ENCODE measurements at regions of chr7 and their contacts with region 1.

Region 1: GRCh38 chr7:111735661-111736551 is 173.6 kb upstream of the IMMP2L start:
- DNase-seq: peak; percentile 47 to 85
- H3K4me3 ChIP-seq: no peak overlapping the region
- H3K27ac ChIP-seq: no peak overlapping the region
- H3K4me1 ChIP-seq: no peaks in the 10 kb centered on the region
- H3K27me3 ChIP-seq: no peaks in the 10 kb centered on the region
- CTCF ChIP-seq: peak in 5 of 7 experiments; percentile 44 to 81 (median 79)
- EP300 ChIP-seq: no peak
- POLR2A ChIP-seq: no peak

Region 2: DNA sequence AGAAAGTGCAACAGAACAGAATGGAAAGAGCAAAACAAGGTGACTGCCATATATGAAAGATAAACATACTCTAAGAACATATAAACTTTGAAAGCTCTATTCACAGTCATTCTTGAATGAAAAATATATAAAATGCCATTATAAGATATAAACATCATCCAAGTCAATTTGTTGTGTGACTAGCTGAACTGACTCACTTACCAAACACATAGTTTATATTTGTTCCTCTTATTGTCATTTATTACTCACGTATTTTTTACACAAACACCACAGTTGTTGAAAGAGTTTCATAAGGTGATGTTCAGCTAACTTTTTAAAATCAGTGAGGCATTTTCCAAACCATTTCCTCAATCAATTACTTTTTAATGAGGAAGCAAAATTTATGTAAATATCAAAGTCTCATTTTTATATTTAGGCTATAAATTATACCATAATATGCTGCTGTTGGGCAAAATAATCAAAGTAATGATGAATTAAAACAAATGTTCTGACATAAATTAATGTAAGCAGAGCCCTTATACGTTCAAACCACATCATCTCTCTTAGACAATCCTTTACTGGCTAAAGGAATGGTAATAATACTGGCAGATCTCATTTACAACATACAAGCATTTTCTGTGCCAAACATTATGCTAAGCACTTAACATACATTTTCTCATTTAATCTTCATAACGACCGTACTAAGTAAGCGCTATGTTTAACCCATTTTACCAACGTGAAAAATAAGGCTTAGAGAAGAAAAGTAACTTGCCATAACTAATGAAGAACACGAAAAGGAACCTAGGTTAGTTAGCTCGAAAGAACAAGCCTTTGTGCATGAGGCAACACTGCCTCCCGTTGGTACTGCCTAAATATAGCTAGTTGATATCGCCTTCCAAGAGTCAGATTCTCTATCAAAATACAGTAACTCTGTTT is 637.6 kb before region 1 on chr7:
- intact Hi-C with region 1: loop called (anchors 10 kb)
- DNase-seq: peak in 1 of 2 donors; percentile 76
- H3K4me3 ChIP-seq: no peak overlapping the region
- H3K27ac ChIP-seq: no peak overlapping the region
- H3K4me1 ChIP-seq: peaks cover 0 to 8% (median 2%) of the 10 kb centered on the region in 4 donors
- H3K27me3 ChIP-seq: no peaks in the 10 kb centered on the region
- CTCF ChIP-seq: peak in 3 of 7 experiments; percentile 5 to 31 (median 16)
- EP300 ChIP-seq: no peak
- POLR2A ChIP-seq: no peak

Region 3: GRCh38 chr7:111540199-111540815 is 195.6 kb before region 1 on chr7:
- intact Hi-C with region 1: no loop called
- DNase-seq: no peak
- H3K4me3 ChIP-seq: no peak overlapping the region
- H3K27ac ChIP-seq: no peak overlapping the region
- H3K4me1 ChIP-seq: no peaks in the 10 kb centered on the region
- H3K27me3 ChIP-seq: no peaks in the 10 kb centered on the region
- CTCF ChIP-seq: no peak
- EP300 ChIP-seq: no peak
- POLR2A ChIP-seq: no peak